ENCODE measurements at regions of chr1 and their contacts with region 1.

Region 1: DNA sequence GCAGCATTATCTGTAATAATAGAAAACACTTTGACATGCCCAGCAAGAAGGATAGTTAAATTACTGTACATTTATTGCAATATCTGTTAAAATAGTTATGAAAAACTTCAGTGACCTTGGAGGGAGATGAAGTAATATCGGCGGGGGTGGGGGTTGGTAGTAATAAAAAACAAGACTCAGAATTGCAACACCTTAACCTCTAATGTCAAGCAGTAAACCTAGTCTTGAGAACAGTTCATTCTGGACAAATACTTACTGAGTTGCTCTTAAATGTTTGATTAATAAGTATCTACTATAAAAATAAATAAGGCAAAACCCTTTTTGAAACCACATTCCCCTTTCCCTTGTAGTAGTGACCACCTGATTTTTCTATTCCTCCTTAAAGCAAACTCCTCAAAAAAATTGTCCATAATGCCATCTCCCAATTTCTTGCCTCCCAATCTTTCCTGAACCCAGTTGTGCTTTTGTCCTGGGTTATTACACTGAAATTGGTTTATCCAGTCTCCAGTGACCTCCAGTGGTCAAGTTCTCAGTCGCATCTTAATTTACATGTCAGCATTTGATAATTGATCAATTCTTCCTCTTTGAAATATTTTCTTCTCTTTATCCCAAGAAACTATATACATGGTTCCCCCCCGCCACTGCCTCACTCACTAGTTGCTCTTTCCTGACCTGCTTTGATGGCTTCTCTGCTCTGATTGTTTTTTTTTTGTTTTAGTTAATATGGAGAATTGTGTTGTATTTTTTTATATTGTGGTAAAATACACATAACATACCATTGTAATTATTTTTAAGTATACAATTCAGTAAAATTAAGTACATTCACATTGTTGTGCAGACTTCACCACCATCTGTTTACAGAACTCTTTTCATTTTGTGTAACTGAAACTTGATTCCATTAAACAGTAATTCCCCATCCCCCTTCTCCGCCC is 36.8 kb downstream of the RAP1A start:
- H3K4me3 Mint-ChIP-seq: no peak overlapping the region
- H3K27ac Mint-ChIP-seq: peak overlapping the region; percentile 10
- H3K4me1 Mint-ChIP-seq: peaks cover 51% of the 10 kb centered on the region
- H3K27me3 Mint-ChIP-seq: no peaks in the 10 kb centered on the region

Region 2: DNA sequence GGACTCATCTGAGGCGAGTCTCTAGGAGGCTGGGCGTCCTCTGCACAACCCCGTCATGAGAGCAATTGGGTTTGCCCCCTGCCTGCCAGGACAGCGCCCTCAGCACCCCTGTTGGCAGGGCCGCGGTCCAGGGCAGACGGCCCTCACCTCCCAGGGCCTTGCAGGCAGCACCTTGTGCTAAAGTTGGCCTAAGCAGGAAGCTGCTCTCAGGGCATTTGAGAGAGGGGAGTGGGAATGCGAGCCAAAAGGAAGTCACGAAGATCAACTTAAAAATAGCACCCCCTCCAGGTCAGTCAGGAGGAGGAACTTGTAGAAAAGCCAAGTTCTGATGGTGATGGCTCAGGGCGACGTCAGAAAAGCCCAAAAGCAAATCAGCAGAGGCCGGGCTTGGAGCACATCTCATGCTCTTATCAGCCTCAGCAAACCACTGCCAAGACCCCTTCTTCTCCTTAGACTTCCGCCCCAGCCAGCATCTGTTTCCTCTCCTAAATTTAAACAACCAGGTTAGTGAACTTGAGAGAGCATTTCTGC is 140.3 kb before region 1 on chr1:
- intact Hi-C with region 1: loop called (anchors 2 kb)
- H3K4me3 Mint-ChIP-seq: peak overlapping the region; percentile 84
- H3K27ac Mint-ChIP-seq: no peak overlapping the region
- H3K4me1 Mint-ChIP-seq: peaks cover 41% of the 10 kb centered on the region
- H3K27me3 Mint-ChIP-seq: no peaks in the 10 kb centered on the region

Region 3: DNA sequence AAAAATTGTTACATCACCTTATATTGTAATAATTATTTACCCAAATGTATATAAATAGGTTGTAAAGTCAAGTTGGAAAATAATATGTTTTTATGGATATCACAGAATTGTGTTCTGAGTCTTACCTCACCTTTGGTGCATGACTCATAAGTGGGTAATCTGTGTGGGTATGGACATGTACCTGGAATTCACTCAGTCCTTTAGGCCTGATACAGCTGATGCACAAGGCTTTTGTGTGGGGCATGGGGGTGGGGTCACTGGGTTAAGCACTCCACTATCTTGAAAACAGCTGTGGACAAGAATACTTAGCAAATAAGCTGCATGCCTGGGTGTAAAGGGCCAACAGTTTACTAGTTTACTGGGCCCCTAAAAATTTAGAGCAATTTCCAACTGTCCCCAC is 48.4 kb after region 1 on chr1:
- intact Hi-C with region 1: loop called (anchors 10 kb)
- H3K4me3 Mint-ChIP-seq: no peak overlapping the region
- H3K27ac Mint-ChIP-seq: no peak overlapping the region
- H3K4me1 Mint-ChIP-seq: peaks cover 7% of the 10 kb centered on the region
- H3K27me3 Mint-ChIP-seq: no peaks in the 10 kb centered on the region

Measured in dendritic cell treated with granulocyte-macrophage colony-stimulating factor and Interleukin-4, amounts not matched to agents 40 ng/mL and 50 ng/mL, for 4 days (primary cell).